B cell (primary cell): ENCODE measurements at regions of chr2 and their contacts with region 1.

Region 1: DNA sequence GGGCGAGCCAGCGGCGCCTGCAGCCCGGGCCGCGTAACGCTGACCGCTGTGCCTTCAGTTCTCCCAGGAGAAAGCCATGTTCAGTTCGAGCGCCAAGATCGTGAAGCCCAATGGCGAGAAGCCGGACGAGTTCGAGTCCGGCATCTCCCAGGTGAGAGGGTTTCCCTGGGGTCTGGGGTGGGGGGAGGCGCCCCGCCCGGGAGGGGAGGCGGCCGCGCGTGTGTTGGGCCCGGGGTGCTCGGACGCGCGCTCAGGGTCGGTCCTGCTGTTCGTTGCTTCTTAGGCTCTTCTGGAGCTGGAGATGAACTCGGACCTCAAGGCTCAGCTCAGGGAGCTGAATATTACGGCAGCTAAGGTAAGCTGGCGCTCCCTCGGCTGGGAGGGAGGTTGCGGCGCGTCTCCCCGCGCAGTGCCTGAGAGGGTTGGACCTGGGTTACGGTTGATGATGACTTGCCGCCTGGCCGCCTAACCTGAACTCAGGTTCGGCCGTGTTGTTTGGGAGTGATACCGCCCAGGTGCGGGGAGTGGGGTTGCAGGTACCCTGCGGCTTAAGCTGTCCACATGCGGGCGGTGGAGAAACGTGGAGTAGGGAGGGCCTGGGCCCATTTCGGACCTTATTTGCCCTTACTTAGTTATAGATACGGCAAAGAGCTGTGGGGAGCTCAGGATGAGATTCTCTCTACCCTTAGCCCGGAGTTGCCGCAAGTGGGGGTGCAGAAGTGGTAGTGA is 638 bp downstream of the RPS7 start:
- DNase-seq: no peak
- ATAC-seq: peak; percentile 43
- H3K4me3 ChIP-seq: peak overlapping the region; percentile 70 to 89 (median 78)
- H3K4me3 Mint-ChIP-seq: peak overlapping the region; percentile 87
- H3K27ac ChIP-seq: peak overlapping the region; percentile 92 to 95
- H3K27ac Mint-ChIP-seq: peak overlapping the region; percentile 93
- H3K4me1 ChIP-seq: peaks cover 15 to 27% of the 10 kb centered on the region in 2 donors
- H3K4me1 Mint-ChIP-seq: peaks cover 39% of the 10 kb centered on the region
- H3K27me3 ChIP-seq: no peaks in the 10 kb centered on the region
- H3K27me3 Mint-ChIP-seq: no peaks in the 10 kb centered on the region
- CTCF ChIP-seq: no peak

Region 2: GRCh38 chr2:3461801-3462492 is 113.8 kb before region 1 on chr2:
- CTCF ChIA-PET with region 1: no interaction called
- POLR2A ChIA-PET with region 1: no interaction called
- intact Hi-C with region 1: loop called (anchors 5 kb)
- DNase-seq: peak; percentile 76
- ATAC-seq: peak; percentile 83
- H3K4me3 ChIP-seq: peak overlapping the region in 2 of 5 experiments; percentile 13 to 28
- H3K4me3 Mint-ChIP-seq: peak overlapping the region; percentile 67
- H3K27ac ChIP-seq: peak overlapping the region; percentile 48 to 81
- H3K27ac Mint-ChIP-seq: peak overlapping the region; percentile 93
- H3K4me1 ChIP-seq: peaks cover 6 to 11% of the 10 kb centered on the region in 2 donors
- H3K4me1 Mint-ChIP-seq: peaks cover 16% of the 10 kb centered on the region
- H3K27me3 ChIP-seq: no peaks in the 10 kb centered on the region
- H3K27me3 Mint-ChIP-seq: no peaks in the 10 kb centered on the region
- CTCF ChIP-seq: peak; percentile 99

Region 3: GRCh38 chr2:3518496-3519254 is 57.0 kb before region 1 on chr2:
- CTCF ChIA-PET with region 1: no interaction called
- POLR2A ChIA-PET with region 1: interaction called, 13 read pairs
- intact Hi-C with region 1: loop called (anchors 1 kb)
- DNase-seq: peak; percentile 99
- ATAC-seq: peak; percentile 76
- H3K4me3 ChIP-seq: peak overlapping the region; percentile 52 to 87 (median 79)
- H3K4me3 Mint-ChIP-seq: peak overlapping the region; percentile 96
- H3K27ac ChIP-seq: peak overlapping the region; percentile 73 to 93
- H3K27ac Mint-ChIP-seq: peak overlapping the region; percentile 97
- H3K4me1 ChIP-seq: peaks cover 18 to 25% of the 10 kb centered on the region in 2 donors
- H3K4me1 Mint-ChIP-seq: peaks cover 38% of the 10 kb centered on the region
- H3K27me3 ChIP-seq: no peaks in the 10 kb centered on the region
- H3K27me3 Mint-ChIP-seq: no peaks in the 10 kb centered on the region
- CTCF ChIP-seq: no peak

Region 4: GRCh38 chr2:3558205-3559014 is 17.3 kb before region 1 on chr2 and contains the start of gene RNASEH1:
- CTCF ChIA-PET with region 1: interaction called, 10 read pairs
- POLR2A ChIA-PET with region 1: interaction called, 33 read pairs
- intact Hi-C with region 1: loop called (anchors 1 kb)
- DNase-seq: peak; percentile 98
- ATAC-seq: peak; percentile 96
- H3K4me3 ChIP-seq: peak within 1 kb of the TSS; percentile 69 to 87 (median 86)
- H3K4me3 Mint-ChIP-seq: peak within 1 kb of the TSS; percentile 95
- H3K27ac ChIP-seq: peak within 1 kb of the TSS; percentile 88 to 94
- H3K27ac Mint-ChIP-seq: peak within 1 kb of the TSS; percentile 98
- H3K4me1 ChIP-seq: peaks cover 21 to 35% of the 10 kb centered on the region in 2 donors
- H3K4me1 Mint-ChIP-seq: peaks cover 49% of the 10 kb centered on the region
- H3K27me3 ChIP-seq: no peaks in the 10 kb centered on the region
- H3K27me3 Mint-ChIP-seq: no peaks in the 10 kb centered on the region
- CTCF ChIP-seq: no peak
- total RNA-seq, gene RNASEH1: 24.2 and 25.1 TPM in 2 replicates

Region 5: DNA sequence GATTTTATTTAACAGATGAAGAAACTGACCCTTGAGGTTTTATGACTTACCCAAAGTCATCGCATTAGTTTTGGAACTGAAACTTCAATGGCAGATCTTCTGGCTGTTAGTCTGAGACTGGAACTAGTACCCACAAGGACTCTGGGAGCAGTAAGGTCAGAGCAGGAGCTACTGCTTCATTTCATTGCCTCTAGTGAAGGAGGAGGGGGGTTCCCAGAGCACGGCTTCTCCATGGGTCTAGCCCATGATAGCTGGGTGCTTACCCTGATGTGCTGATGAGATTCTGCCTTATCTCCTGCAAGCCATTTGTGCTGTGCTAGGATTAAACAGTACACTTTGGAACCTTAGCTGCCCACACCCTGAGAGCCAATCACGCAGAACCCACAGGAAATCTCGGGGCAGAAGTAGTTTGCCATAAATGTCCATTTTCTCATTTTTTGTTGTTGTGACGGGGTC is 12.1 kb before region 1 on chr2:
- CTCF ChIA-PET with region 1: interaction called, 16 read pairs
- POLR2A ChIA-PET with region 1: interaction called, 33 read pairs
- intact Hi-C with region 1: loop called (anchors 1 kb)
- DNase-seq: peak; percentile 51
- ATAC-seq: peak; percentile 56
- H3K4me3 ChIP-seq: peak overlapping the region in 4 of 5 experiments; percentile 21 to 42 (median 28)
- H3K4me3 Mint-ChIP-seq: peak overlapping the region; percentile 84
- H3K27ac ChIP-seq: peak overlapping the region; percentile 73
- H3K27ac Mint-ChIP-seq: peak overlapping the region; percentile 95
- H3K4me1 ChIP-seq: peaks cover 34 to 50% of the 10 kb centered on the region in 2 donors
- H3K4me1 Mint-ChIP-seq: peaks cover 46% of the 10 kb centered on the region
- H3K27me3 ChIP-seq: no peaks in the 10 kb centered on the region
- H3K27me3 Mint-ChIP-seq: no peaks in the 10 kb centered on the region
- CTCF ChIP-seq: no peak